ENCODE measurements at regions of chr20 and their contacts with region 1.

Region 1: GRCh38 chr20:62386383-62387218 is at the start of gene RPS21:
- DNase-seq: peak; percentile 86 to 96 (median 93)
- ATAC-seq: peak; percentile 92 to 93 (median 92)
- H3K4me3 ChIP-seq: peak within 1 kb of the TSS; percentile 88 to 90
- H3K4me3 Mint-ChIP-seq: peak within 1 kb of the TSS; percentile 87 to 88 (median 88)
- H3K27ac ChIP-seq: peak within 1 kb of the TSS; percentile 94
- H3K27ac Mint-ChIP-seq: peak within 1 kb of the TSS; percentile 84 to 90
- H3K4me1 ChIP-seq: peaks cover 16 to 44% of the 10 kb centered on the region in 2 experiments
- H3K4me1 Mint-ChIP-seq: peaks cover 50 to 75% (median 56%) of the 10 kb centered on the region in 3 donors
- H3K27me3 ChIP-seq: no peaks in the 10 kb centered on the region
- H3K27me3 Mint-ChIP-seq: no peaks in the 10 kb centered on the region
- total RNA-seq, gene RPS21: 2,807 to 3,290 (median 3,085) TPM

Region 2: GRCh38 chr20:62396367-62397239 is 10.0 kb after region 1 on chr20:
- CTCF ChIA-PET with region 1: interaction called, 5 to 10 read pairs
- POLR2A ChIA-PET with region 1: no interaction called
- DNase-seq: no peak
- ATAC-seq: no peak
- H3K4me3 ChIP-seq: no peak overlapping the region
- H3K4me3 Mint-ChIP-seq: no peak overlapping the region
- H3K27ac ChIP-seq: no peak overlapping the region
- H3K27ac Mint-ChIP-seq: no peak overlapping the region
- H3K4me1 ChIP-seq: no peaks in the 10 kb centered on the region
- H3K4me1 Mint-ChIP-seq: no peaks in the 10 kb centered on the region
- H3K27me3 ChIP-seq: no peaks in the 10 kb centered on the region
- H3K27me3 Mint-ChIP-seq: no peaks in the 10 kb centered on the region

Region 3: DNA sequence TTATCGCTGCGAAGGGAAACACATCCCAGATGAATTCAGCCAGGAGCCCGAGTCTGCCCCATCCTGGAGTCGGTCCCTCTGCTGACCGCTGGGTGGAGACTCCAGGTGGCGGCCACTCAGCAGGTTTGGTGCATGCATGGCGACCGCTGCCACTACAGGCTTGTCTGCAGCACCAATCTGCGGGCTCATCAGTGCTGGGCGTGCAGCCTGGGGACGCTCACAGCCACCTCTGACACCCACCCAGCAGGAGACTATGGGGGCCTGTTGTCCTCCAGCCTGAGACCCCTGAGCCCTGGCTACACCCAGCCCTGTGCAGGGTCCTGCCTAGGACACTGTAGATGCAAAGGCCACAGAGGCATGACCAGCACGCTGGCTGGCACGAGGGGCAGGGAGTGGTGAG is 129.7 kb after region 1 on chr20:
- CTCF ChIA-PET with region 1: no interaction called
- POLR2A ChIA-PET with region 1: no interaction called
- DNase-seq: no peak
- ATAC-seq: no peak
- H3K4me3 ChIP-seq: no peak overlapping the region
- H3K4me3 Mint-ChIP-seq: no peak overlapping the region
- H3K27ac ChIP-seq: no peak overlapping the region
- H3K27ac Mint-ChIP-seq: no peak overlapping the region
- H3K4me1 ChIP-seq: peaks cover 9 to 22% of the 10 kb centered on the region in 2 experiments
- H3K4me1 Mint-ChIP-seq: peaks cover 3 to 7% (median 5%) of the 10 kb centered on the region in 3 donors
- H3K27me3 ChIP-seq: peaks cover 0 to 76% of the 10 kb centered on the region in 2 experiments
- H3K27me3 Mint-ChIP-seq: peaks cover 0 to 35% of the 10 kb centered on the region in 2 donors

Region 4: GRCh38 chr20:62536871-62537401 is 150.3 kb after region 1 on chr20:
- CTCF ChIA-PET with region 1: no interaction called
- POLR2A ChIA-PET with region 1: no interaction called
- DNase-seq: no peak
- ATAC-seq: no peak
- H3K4me3 ChIP-seq: no peak overlapping the region
- H3K4me3 Mint-ChIP-seq: no peak overlapping the region
- H3K27ac ChIP-seq: no peak overlapping the region
- H3K27ac Mint-ChIP-seq: no peak overlapping the region
- H3K4me1 ChIP-seq: peaks cover 0 to 2% of the 10 kb centered on the region in 2 experiments
- H3K4me1 Mint-ChIP-seq: no peaks in the 10 kb centered on the region
- H3K27me3 ChIP-seq: peaks cover 0 to 27% of the 10 kb centered on the region in 2 experiments
- H3K27me3 Mint-ChIP-seq: peaks cover 0 to 6% of the 10 kb centered on the region in 2 donors

Region 5: GRCh38 chr20:62652051-62652926 is 265.7 kb after region 1 on chr20:
- CTCF ChIA-PET with region 1: no interaction called
- POLR2A ChIA-PET with region 1: no interaction called
- DNase-seq: peak; percentile 44 to 85 (median 67)
- ATAC-seq: peak; percentile 64 to 75 (median 70)
- H3K4me3 ChIP-seq: peak overlapping the region in 1 of 2 donors; percentile 39
- H3K4me3 Mint-ChIP-seq: peak overlapping the region; percentile 75 to 82 (median 77)
- H3K27ac ChIP-seq: peak overlapping the region; percentile 77
- H3K27ac Mint-ChIP-seq: peak overlapping the region; percentile 95 to 97
- H3K4me1 ChIP-seq: peaks cover 8 to 33% of the 10 kb centered on the region in 2 experiments
- H3K4me1 Mint-ChIP-seq: peaks cover 21 to 36% (median 33%) of the 10 kb centered on the region in 3 donors
- H3K27me3 ChIP-seq: no peaks in the 10 kb centered on the region
- H3K27me3 Mint-ChIP-seq: no peaks in the 10 kb centered on the region